ENCODE measurements at regions of chr2 and their contacts with region 1.

Region 1: GRCh38 chr2:26503231-26503880 is 25.4 kb upstream of the OTOF start:
- DNase-seq: peak; percentile 57 to 84 (median 78)
- ATAC-seq: peak; percentile 98
- H3K4me3 ChIP-seq: peak overlapping the region; percentile 54 to 81
- H3K4me3 Mint-ChIP-seq: peak overlapping the region; percentile 78
- H3K27ac ChIP-seq: no peak overlapping the region
- H3K27ac Mint-ChIP-seq: no peak overlapping the region
- H3K4me1 ChIP-seq: peaks cover 9% of the 10 kb centered on the region
- H3K4me1 Mint-ChIP-seq: peaks cover 6% of the 10 kb centered on the region
- H3K27me3 ChIP-seq: peaks cover 0 to 7% of the 10 kb centered on the region in 2 experiments
- H3K27me3 Mint-ChIP-seq: no peaks in the 10 kb centered on the region
- CTCF ChIP-seq: peak; percentile 80

Region 2: DNA sequence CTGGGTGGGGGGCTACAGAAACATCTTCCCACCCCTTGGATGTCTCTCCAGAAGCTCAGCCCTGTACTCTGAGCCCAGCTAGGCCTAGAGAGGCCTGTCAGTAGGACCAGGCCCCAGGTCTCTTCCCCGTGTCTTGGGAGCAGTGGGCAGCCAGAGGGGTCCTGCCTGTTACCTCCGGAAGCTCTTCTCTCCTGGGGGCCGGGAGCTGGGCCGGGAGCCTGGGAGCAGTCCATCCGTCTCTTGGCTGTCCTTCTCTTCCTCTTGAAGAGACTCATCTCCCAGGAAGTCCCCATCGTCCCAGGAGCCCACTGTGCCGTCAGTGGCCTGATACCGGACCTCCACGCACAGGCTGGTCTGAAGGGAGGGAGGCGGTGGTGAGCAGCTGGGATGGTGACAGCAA is 12.9 kb after region 1 on chr2:
- CTCF ChIA-PET with region 1: interaction called, 27 read pairs
- POLR2A ChIA-PET with region 1: no interaction called
- intact Hi-C with region 1: no loop called
- DNase-seq: no peak
- ATAC-seq: no peak
- H3K4me3 ChIP-seq: no peak overlapping the region
- H3K4me3 Mint-ChIP-seq: no peak overlapping the region
- H3K27ac ChIP-seq: no peak overlapping the region
- H3K27ac Mint-ChIP-seq: no peak overlapping the region
- H3K4me1 ChIP-seq: peaks cover 23% of the 10 kb centered on the region
- H3K4me1 Mint-ChIP-seq: peaks cover 24% of the 10 kb centered on the region
- H3K27me3 ChIP-seq: no peaks in the 10 kb centered on the region
- H3K27me3 Mint-ChIP-seq: no peaks in the 10 kb centered on the region
- CTCF ChIP-seq: no peak

Measured in CD8-positive, alpha-beta T cell (primary cell).